Posterior cingulate gyrus (tissue), 11 donors: ENCODE measurements at regions of chr5 and their contacts with region 1.

Region 1: GRCh38 chr5:83718195-83718825 is 2.3 kb downstream of the HAPLN1 start:
- DNase-seq: peak in 5 of 10 donors; percentile 18 to 66 (median 38)

Region 2: GRCh38 chr5:85049020-85049419 is 1330.7 kb after region 1 on chr5:
- intact Hi-C with region 1: loop called (anchors 5 kb)
- DNase-seq: no peak